HCT116 (cell line): ENCODE measurements at regions of chr11 and their contacts with region 1.

Region 1: GRCh38 chr11:64204464-64204989 is 2.0 kb upstream of the FERMT3 start:
- DNase-seq: peak; percentile 88
- ATAC-seq: peak; percentile 80
- H3K4me3 ChIP-seq: no peak overlapping the region
- H3K27ac ChIP-seq: no peak overlapping the region
- H3K4me1 ChIP-seq: peaks cover 0 to 8% of the 10 kb centered on the region in 2 experiments; a peak in 1 of 4 replicates
- H3K27me3 ChIP-seq: no peaks in the 10 kb centered on the region
- CTCF ChIP-seq: peak; percentile 75 to 90 (median 87)
- POLR2A ChIP-seq: no peak
- RAD21 ChIP-seq: peak; percentile 94

Region 2: GRCh38 chr11:64185816-64186498 is 18.6 kb before region 1 on chr11 and contains the start of gene STIP1:
- CTCF ChIA-PET with region 1: interaction called, 15 read pairs
- POLR2A ChIA-PET with region 1: interaction called, 10 read pairs
- RAD21 ChIA-PET with region 1: interaction called in 1 of 2 experiments, 3 read pairs
- intact Hi-C with region 1: no loop called
- DNase-seq: peak; percentile 100
- ATAC-seq: peak; percentile 87
- H3K4me3 ChIP-seq: peak within 1 kb of the TSS; percentile 81 to 88
- H3K27ac ChIP-seq: peak within 1 kb of the TSS; percentile 90
- H3K4me1 ChIP-seq: peaks cover 26 to 48% of the 10 kb centered on the region in 2 experiments
- H3K27me3 ChIP-seq: no peaks in the 10 kb centered on the region
- CTCF ChIP-seq: peak in 2 of 3 experiments; percentile 15 to 29; a peak in 1 of 6 replicates
- POLR2A ChIP-seq: peak; percentile 19
- RAD21 ChIP-seq: no peak
- total RNA-seq, gene STIP1: 336 TPM

Region 3: DNA sequence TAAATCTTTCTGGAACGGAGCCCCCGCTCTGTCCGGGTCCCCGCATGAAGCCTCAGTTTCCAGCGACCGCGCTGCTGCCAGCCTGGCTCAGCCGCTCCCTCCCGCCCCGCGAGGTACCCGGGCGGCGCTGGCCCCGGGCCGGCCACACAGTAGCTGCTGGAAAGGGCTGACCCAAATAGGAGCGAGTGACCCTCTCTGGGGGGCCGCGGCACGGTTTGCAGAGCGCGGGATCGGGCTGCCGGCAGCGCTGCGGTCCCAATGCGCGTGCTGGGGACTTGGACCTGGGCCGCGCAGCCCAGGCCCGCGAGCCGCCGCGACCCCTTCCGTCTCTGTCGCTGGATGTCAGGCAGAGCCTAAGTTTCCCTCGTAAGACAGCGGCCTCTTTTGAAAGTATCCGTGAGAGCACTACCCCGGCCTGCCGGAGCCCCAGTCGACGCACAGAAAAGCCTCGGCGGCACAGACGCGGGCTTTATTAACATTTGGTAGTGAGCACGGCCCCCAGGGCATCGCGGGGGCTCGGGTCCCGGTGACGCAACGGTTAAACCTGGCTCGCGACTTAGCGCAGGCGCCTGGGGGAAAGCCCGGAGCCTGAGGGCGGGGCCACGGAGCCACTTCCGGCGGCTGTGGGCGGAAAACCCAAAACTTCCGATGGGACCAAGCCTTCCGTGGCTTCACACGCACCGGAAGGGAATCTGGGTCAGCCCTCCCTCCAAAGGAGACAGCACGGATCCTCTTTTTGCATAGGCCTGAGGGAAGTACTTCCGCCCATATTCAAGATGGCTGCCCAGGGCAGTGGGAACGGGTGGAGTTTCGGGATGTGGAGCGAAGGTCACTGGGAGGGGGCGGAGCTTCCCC is 65.1 kb after region 1 on chr11:
- CTCF ChIA-PET with region 1: interaction called, 4 read pairs
- POLR2A ChIA-PET with region 1: interaction called, 3 read pairs
- RAD21 ChIA-PET with region 1: no interaction called
- intact Hi-C with region 1: loop called (anchors 2 kb)
- DNase-seq: peak; percentile 99
- ATAC-seq: peak; percentile 83
- H3K4me3 ChIP-seq: peak overlapping the region; percentile 72 to 98
- H3K27ac ChIP-seq: peak overlapping the region; percentile 95
- H3K4me1 ChIP-seq: peaks cover 18 to 31% of the 10 kb centered on the region in 2 experiments; a peak in 3 of 4 replicates
- H3K27me3 ChIP-seq: no peaks in the 10 kb centered on the region
- CTCF ChIP-seq: no peak
- POLR2A ChIP-seq: peak; percentile 14
- RAD21 ChIP-seq: no peak

Region 4: DNA sequence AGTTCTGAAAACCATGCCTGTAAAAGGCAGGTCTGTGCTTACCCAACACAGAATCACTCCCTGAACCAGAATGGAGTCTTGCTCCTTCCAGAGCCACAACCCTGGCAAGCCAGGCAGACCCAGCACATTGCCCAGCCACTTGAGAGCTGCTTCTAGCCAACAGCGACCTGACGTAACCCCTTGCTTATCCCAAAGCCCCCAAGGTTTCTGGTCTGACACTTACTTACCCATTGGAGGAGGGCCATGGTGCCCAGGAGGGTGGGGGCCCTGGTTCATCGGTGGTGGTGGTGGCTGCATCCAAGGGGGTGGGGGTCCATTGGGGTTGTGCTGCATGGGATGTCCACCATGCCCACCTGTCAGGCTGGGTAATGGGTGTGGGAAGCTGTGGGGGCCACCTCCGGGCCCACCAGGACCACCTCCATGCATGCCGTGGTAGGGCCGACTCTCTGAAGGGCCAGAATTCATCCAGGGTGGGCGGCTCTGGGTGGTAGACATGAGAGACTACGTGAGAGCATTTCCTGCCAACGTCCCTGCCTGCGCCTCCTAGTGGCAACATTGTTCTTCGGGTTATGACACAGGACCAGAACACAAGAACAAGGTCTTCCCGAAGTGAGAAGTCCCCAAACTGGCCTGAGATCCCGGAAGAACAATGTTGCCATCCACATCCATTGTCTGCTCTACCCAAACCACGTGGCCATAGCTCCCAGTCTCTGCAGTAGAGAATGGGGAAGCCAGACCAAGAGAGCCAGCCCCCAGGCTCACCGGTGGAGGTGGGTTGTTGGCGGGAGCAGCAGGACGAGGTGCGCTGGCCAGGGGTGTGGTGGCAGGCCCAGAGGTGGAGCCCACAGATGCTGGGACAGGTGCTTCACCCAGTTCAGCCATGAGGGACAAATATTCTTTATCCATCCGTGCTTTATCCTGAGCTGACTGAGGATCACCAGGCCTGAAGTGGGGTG is 563.1 kb after region 1 on chr11:
- CTCF ChIA-PET with region 1: no interaction called
- POLR2A ChIA-PET with region 1: no interaction called
- RAD21 ChIA-PET with region 1: no interaction called
- intact Hi-C with region 1: no loop called
- DNase-seq: peak; percentile 45
- ATAC-seq: peak; percentile 77
- H3K4me3 ChIP-seq: no peak overlapping the region
- H3K27ac ChIP-seq: no peak overlapping the region; the same call in 1 of the 2 replicates
- H3K4me1 ChIP-seq: no peaks in the 10 kb centered on the region; a peak in 1 of 4 replicates
- H3K27me3 ChIP-seq: no peaks in the 10 kb centered on the region
- CTCF ChIP-seq: peak in 2 of 3 experiments; percentile 83 to 85; a peak in 4 of 6 replicates
- POLR2A ChIP-seq: no peak
- RAD21 ChIP-seq: no peak